ENCODE measurements at regions of chr11 and their contacts with region 1.

Region 1: DNA sequence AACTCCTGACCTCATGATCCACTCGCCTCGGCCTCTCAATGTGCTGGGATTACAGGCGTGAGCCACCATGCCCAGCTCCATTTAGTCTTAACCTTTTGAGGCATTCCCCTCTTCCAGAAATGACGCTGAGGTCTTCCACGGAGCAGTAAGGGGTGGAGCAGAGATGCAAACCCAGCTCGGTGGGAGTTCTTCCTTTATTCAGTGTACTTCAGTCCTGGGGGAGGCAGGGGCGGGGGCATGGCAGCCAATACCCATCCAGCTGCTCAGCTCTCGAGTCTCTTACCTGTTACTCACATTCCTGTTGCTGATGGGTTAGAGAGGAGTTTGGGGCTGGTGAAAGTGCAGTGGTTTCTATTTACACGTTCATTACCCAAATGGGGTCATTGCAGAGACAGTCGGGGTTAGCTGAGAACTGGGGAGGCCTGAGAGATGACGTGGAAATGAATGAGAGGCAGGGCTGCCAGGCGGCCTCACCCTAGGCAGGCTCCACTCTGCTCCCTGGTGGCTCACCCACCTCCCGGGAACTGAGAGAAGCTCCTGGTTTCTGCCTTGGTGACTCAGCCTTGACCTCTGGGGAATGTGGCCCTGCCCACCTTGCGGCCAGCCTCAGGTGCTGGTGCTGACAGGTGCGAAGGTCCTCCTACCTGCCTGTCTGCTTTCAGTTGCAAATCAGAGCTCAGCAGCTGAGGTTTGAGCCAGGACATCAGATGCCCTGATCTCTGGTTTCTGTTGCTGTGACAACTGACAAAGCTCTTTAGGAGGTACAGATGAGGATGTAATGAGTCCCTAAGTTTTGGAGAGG is 13.4 kb upstream of the ST14 start:
- DNase-seq: peak; percentile 65
- ATAC-seq: peak; percentile 66
- H3K4me3 ChIP-seq: no peak overlapping the region; a peak in 1 of 6 replicates
- H3K27ac ChIP-seq: peak overlapping the region; percentile 87
- H3K4me1 ChIP-seq: peaks cover 88% of the 10 kb centered on the region
- H3K27me3 ChIP-seq: no peaks in the 10 kb centered on the region
- CTCF ChIP-seq: peak; percentile 70
- EP300 ChIP-seq: peak in 1 of 2 experiments; percentile 42; a peak in 1 of 4 replicates
- POLR2A ChIP-seq: no peak
- RAD21 ChIP-seq: peak; percentile 63

Region 2: GRCh38 chr11:129922674-129923073 is 223.5 kb before region 1 on chr11:
- CTCF ChIA-PET with region 1: no interaction called
- POLR2A ChIA-PET with region 1: no interaction called
- in situ Hi-C with region 1: no loop called
- intact Hi-C with region 1: loop called (anchors 1 kb)
- DNase-seq: no peak
- ATAC-seq: no peak
- H3K4me3 ChIP-seq: no peak overlapping the region
- H3K27ac ChIP-seq: no peak overlapping the region
- H3K4me1 ChIP-seq: no peaks in the 10 kb centered on the region
- H3K27me3 ChIP-seq: no peaks in the 10 kb centered on the region
- CTCF ChIP-seq: no peak
- EP300 ChIP-seq: no peak
- POLR2A ChIP-seq: no peak
- RAD21 ChIP-seq: no peak

Region 3: GRCh38 chr11:130163346-130164220 is 17.4 kb after region 1 on chr11:
- CTCF ChIA-PET with region 1: no interaction called
- POLR2A ChIA-PET with region 1: interaction called, 17 read pairs
- in situ Hi-C with region 1: no loop called
- intact Hi-C with region 1: no loop called
- DNase-seq: peak; percentile 55
- ATAC-seq: peak; percentile 88
- H3K4me3 ChIP-seq: peak overlapping the region; percentile 54 to 64 (median 59); a peak in 5 of 6 replicates
- H3K27ac ChIP-seq: peak overlapping the region; percentile 55
- H3K4me1 ChIP-seq: peaks cover 44% of the 10 kb centered on the region
- H3K27me3 ChIP-seq: no peaks in the 10 kb centered on the region; a peak in 1 of 5 replicates
- CTCF ChIP-seq: peak; percentile 66
- EP300 ChIP-seq: 0 out of 4 replicates have a peak, but pooled peaks of 1 of the 2 experiments have one; percentile 20
- POLR2A ChIP-seq: peak; percentile 53 to 58; a peak in 3 of 4 replicates
- RAD21 ChIP-seq: no peak

Region 4: DNA sequence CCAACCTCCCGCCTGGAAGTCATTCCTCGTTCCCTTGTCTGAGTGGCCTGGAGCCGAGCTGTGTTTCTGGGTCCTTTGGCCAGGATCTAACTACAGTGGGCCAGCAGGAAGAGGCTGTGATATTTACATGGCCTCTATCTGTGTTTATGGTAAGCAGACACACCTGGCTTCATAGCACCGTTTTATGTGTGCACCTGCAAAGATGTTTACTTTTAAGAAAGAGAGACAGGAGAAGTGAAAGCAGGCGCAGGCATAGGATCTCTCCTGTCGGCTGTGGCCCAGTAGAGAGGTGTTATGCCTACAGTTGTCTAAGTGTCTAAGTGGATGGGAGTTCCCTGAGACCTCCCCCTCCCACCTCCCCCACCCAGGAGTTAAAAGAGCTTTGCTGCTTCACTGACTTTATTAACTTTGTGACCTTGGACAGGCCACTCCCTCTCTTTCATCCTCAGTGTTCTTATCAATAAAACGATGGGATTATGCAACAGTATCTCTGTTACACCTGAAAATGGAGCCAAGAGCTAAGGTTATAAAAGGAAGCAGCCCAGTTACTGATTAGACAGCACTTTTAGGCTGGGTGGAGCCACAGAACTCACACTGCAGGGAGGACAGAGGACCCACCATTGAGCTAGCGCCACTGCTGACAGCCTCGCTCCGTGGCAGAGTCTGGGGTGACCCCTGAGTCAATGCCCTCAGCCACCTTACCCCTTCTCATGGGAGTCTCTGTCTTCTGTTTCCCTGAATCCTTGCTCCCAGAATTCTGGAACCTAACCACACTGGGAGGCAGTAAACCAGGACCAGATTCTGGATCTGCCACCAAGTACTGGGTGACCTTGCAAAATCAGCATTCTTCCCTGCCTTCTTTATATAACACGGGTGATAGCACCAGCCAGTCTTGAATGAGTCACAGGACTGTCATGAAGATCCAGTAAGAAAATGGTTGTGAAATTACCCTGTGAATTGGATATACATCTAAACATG is 35.4 kb after region 1 on chr11:
- CTCF ChIA-PET with region 1: no interaction called
- POLR2A ChIA-PET with region 1: interaction called, 38 read pairs
- in situ Hi-C with region 1: no loop called
- intact Hi-C with region 1: loop called (anchors 1 kb)
- DNase-seq: peak; percentile 99
- ATAC-seq: peak; percentile 96
- H3K4me3 ChIP-seq: peak overlapping the region; percentile 35 to 66 (median 51)
- H3K27ac ChIP-seq: peak overlapping the region; percentile 97
- H3K4me1 ChIP-seq: peaks cover 45% of the 10 kb centered on the region
- H3K27me3 ChIP-seq: no peaks in the 10 kb centered on the region
- CTCF ChIP-seq: peak; percentile 49
- EP300 ChIP-seq: peak in 1 of 2 experiments; percentile 96; a peak in 2 of 4 replicates
- POLR2A ChIP-seq: peak; percentile 84 to 96
- RAD21 ChIP-seq: peak; percentile 33; the same call in 1 of the 2 replicates

Region 5: DNA sequence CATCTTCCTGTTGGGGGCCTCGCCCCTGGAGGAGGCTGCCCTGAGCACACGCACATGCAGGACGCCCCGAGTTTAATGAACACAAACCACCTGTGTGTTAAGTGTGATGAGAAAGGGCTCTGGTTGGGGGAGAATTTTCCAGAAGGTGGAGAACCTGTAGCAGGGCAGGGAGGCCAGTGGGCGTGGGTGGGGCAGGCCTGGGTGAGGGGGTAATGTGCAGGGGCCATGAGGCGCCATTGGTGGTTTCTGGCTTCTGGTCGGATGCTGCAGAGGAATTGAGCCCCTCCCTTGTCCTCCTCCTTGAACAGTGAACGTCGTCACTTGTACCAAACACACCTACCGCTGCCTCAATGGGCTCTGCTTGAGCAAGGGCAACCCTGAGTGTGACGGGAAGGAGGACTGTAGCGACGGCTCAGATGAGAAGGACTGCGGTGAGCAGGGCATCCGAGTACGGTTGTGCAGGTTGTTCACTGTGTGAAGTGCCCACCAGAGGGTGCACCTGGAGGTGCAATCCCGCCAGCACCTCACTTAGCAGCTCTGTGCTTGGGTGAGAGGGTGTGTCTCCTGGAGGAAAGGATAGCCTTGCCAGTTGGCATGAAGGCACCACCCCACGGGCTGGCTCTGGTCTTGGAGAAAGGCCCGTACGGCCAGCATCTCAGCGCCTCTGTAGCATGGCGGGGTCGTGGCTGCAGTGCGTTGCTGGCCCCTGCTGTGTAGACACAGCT is 52.6 kb after region 1 on chr11:
- CTCF ChIA-PET with region 1: no interaction called
- POLR2A ChIA-PET with region 1: no interaction called
- in situ Hi-C with region 1: no loop called
- intact Hi-C with region 1: no loop called
- DNase-seq: no peak
- ATAC-seq: peak; percentile 59
- H3K4me3 ChIP-seq: no peak overlapping the region
- H3K27ac ChIP-seq: no peak overlapping the region
- H3K4me1 ChIP-seq: peaks cover 4% of the 10 kb centered on the region
- H3K27me3 ChIP-seq: no peaks in the 10 kb centered on the region
- CTCF ChIP-seq: peak; percentile 34
- EP300 ChIP-seq: no peak
- POLR2A ChIP-seq: no peak
- RAD21 ChIP-seq: no peak